Right cardiac atrium (tissue), 5 donors: ENCODE measurements at regions of chr19 and their contacts with region 1.

Region 1: GRCh38 chr19:2578901-2579677 is 103.2 kb downstream of the GADD45B start:
- DNase-seq: peak; percentile 92 to 97 (median 96)
- ATAC-seq: peak; percentile 89
- H3K4me3 ChIP-seq: peak overlapping the region; percentile 1
- H3K27ac ChIP-seq: peak overlapping the region; percentile 97
- H3K4me1 ChIP-seq: peaks cover 12% of the 10 kb centered on the region
- H3K27me3 ChIP-seq: no peaks in the 10 kb centered on the region

Region 2: GRCh38 chr19:2289714-2290435 is 289.2 kb before region 1 on chr19:
- intact Hi-C with region 1: no loop called
- DNase-seq: peak; percentile 42 to 77 (median 72)
- ATAC-seq: peak; percentile 7 to 30
- H3K4me3 ChIP-seq: peak overlapping the region; percentile 12
- H3K27ac ChIP-seq: no peak overlapping the region
- H3K4me1 ChIP-seq: peaks cover 3% of the 10 kb centered on the region
- H3K27me3 ChIP-seq: no peaks in the 10 kb centered on the region

Region 3: DNA sequence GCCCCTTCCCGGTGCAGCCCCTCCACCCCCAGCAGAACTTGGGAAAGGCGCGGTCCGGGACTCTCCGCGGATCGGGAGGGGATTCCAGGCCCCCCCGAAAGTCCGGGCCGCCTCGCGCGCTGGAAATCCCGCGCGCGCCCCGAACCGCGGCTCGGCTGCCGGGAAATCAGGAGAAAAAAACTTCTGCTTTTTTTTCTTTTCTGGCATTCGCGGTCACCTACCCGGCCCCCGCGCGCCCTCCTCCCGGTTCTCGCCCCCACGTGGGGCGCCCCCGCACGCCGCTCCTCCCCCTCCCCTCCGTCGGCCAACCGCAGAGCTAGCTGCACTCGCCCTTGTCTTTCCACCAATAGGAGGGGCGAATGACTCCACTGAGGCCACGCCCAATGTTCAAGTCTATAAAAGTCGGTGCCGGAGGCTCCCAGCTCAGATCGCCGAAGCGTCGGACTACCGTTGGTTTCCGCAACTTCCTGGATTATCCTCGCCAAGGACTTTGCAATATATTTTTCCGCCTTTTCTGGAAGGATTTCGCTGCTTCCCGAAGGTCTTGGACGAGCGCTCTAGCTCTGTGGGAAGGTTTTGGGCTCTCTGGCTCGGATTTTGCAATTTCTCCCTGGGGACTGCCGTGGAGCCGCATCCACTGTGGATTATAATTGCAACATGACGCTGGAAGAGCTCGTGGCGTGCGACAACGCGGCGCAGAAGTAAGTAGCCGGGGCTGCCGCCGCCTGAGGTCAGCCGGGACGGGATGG is 103.2 kb before region 1 on chr19 and contains the start of gene GADD45B:
- intact Hi-C with region 1: loop called (anchors 2 to 10 kb)
- DNase-seq: peak; percentile 98 to 99 (median 99)
- ATAC-seq: peak; percentile 82 to 83
- H3K4me3 ChIP-seq: peak within 1 kb of the TSS; percentile 84
- H3K27ac ChIP-seq: peak within 1 kb of the TSS; percentile 97
- H3K4me1 ChIP-seq: no peaks in the 10 kb centered on the region
- H3K27me3 ChIP-seq: no peaks in the 10 kb centered on the region
- total RNA-seq, gene GADD45B: 52.4 to 205 (median 78.9) TPM